ENCODE measurements at regions of chr9 and their contacts with region 1.

Region 1: DNA sequence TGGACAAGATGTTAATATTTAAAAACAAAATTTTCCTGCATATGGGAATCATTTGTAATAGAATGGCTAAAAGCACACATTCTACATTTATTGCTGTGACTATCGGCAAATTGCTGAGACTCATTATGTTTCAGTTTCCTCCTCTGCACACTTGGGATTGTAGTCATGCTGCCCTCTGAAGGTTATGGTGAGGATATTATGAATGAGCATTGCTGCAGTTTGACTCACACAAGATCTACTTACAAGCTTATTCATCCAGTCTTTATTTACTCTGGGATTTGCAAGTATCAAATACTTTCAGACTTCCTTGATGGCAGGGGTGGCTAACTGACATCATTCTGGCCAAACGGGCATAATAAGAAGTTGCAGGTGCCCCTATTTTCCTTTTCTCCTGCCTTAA is 9.5 kb upstream of the NFIL3 start:
- DNase-seq: peak in 3 of 7 donors; percentile 43 to 48 (median 47)
- H3K4me3 ChIP-seq: no peak overlapping the region
- H3K27ac ChIP-seq: no peak overlapping the region
- H3K4me1 ChIP-seq: no peaks in the 10 kb centered on the region
- H3K27me3 ChIP-seq: no peaks in the 10 kb centered on the region
- CTCF ChIP-seq: peak in 5 of 6 experiments; percentile 53 to 63 (median 60)
- POLR2A ChIP-seq: no peak

Region 2: GRCh38 chr9:91036826-91037510 is 396.2 kb before region 1 on chr9:
- intact Hi-C with region 1: loop called (anchors 5 to 10 kb)
- DNase-seq: peak; percentile 75 to 93 (median 90)
- H3K4me3 ChIP-seq: no peak overlapping the region
- H3K27ac ChIP-seq: peak overlapping the region in 2 of 5 donors; percentile 73 to 79
- H3K4me1 ChIP-seq: peaks cover 7 to 17% of the 10 kb centered on the region in 2 donors
- H3K27me3 ChIP-seq: no peaks in the 10 kb centered on the region
- CTCF ChIP-seq: peak; percentile 27 to 82 (median 74)
- POLR2A ChIP-seq: no peak

Region 3: DNA sequence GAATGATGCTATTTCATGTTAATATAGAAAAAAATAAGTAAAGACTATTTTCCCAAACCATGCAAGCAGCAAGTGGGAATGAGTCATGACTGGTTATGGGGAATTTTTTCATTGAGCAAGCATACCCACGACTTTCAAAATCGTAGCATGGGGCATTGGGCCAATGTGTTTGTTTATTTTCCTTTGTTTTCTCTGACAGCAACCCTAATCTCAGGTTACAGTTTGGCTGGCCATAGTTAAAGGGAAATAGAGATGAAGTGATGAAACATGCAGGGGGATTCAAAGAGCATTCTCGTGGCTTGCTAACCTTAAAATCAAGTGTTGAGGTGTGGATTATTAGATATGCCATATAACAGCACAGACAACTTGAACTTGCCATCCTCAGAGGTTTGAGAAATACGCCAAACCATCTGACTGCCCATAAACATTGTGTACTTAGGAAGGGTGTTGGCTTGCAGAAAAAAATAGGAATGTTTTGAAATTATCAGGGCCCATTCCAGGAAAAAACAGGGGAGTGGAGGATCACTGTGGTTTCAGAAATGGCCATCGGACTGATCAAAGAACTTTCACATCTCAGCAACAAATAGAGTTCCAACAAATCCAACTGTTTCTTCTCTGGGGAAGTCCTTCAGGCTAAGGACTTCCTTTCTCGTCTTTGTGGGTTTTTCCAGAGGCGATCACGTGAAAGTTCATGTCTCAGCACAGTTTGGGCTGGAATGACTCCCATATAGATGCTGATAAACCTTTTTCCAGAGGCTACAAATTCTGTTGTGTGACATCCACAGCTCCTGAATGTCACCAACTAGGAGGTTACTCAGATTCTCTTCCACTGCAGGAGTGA is 372.5 kb before region 1 on chr9:
- intact Hi-C with region 1: no loop called
- DNase-seq: peak; percentile 32 to 81 (median 74)
- H3K4me3 ChIP-seq: no peak overlapping the region
- H3K27ac ChIP-seq: peak overlapping the region in 3 of 5 donors; percentile 29 to 68 (median 62)
- H3K4me1 ChIP-seq: peaks cover 0 to 19% of the 10 kb centered on the region in 2 donors
- H3K27me3 ChIP-seq: no peaks in the 10 kb centered on the region
- CTCF ChIP-seq: no peak
- POLR2A ChIP-seq: no peak

Region 4: DNA sequence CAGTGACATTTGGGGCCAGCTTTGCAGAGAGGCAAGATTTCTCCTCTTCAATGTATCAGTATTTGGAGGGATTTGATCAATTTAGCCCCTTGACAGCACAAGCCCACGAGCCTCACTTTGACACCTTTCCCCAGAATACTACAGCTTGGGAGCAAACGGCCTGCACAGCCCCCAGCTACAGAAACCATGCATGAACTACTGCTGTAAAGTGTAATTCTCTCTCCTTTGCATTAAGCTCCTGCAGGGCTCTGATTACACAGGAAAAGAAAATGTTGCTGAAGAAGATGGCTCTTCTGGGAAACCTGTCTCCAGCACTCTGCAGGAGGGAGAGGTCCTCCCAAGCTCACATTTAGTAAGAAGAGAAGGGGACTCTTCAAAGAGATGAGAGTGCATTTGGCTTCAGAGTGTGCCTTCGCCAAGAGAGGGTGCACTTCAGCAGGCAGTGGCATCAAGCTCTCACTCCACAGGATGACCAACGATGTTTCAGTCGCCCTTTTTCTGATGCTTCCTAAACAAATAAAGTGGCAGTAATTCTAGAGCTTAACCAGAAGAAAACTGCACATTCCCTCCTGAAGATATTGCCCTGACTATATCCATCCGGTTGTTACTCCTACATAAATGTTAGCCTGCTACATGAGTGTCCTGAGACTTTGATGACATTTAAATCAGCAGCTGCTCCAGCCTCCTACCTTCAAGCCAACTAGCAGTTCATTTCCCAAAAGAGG is 343.6 kb before region 1 on chr9:
- intact Hi-C with region 1: loop called in 1 of 2 experiments (anchors 10 kb)
- DNase-seq: peak; percentile 35 to 71 (median 58)
- H3K4me3 ChIP-seq: no peak overlapping the region
- H3K27ac ChIP-seq: no peak overlapping the region
- H3K4me1 ChIP-seq: no peaks in the 10 kb centered on the region
- H3K27me3 ChIP-seq: no peaks in the 10 kb centered on the region
- CTCF ChIP-seq: peak in 5 of 6 experiments; percentile 30 to 52 (median 50)
- POLR2A ChIP-seq: no peak

Measured in adrenal gland (tissue), 19 donors.